Caco-2 (cell line): ENCODE measurements at regions of chr2 and their contacts with region 1.

Region 1: GRCh38 chr2:20225294-20226151 is 593 bp upstream of the SDC1 start:
- DNase-seq: peak; percentile 88 to 89
- H3K4me3 ChIP-seq: peak overlapping the region; percentile 56
- H3K4me3 Mint-ChIP-seq: peak overlapping the region; percentile 78
- H3K27ac Mint-ChIP-seq: peak overlapping the region; percentile 88
- H3K4me1 ChIP-seq: peaks cover 19% of the 10 kb centered on the region
- H3K4me1 Mint-ChIP-seq: peaks cover 13% of the 10 kb centered on the region
- H3K27me3 ChIP-seq: no peaks in the 10 kb centered on the region
- H3K27me3 Mint-ChIP-seq: no peaks in the 10 kb centered on the region
- CTCF ChIP-seq: peak; percentile 60 to 83

Region 2: GRCh38 chr2:19955544-19956422 is 269.7 kb before region 1 on chr2:
- CTCF ChIA-PET with region 1: interaction called, 8 read pairs
- POLR2A ChIA-PET with region 1: no interaction called
- intact Hi-C with region 1: loop called (anchors 1 kb)
- DNase-seq: peak; percentile 78 to 82
- H3K4me3 ChIP-seq: no peak overlapping the region
- H3K4me3 Mint-ChIP-seq: no peak overlapping the region
- H3K27ac Mint-ChIP-seq: no peak overlapping the region
- H3K4me1 ChIP-seq: no peaks in the 10 kb centered on the region
- H3K4me1 Mint-ChIP-seq: no peaks in the 10 kb centered on the region
- H3K27me3 ChIP-seq: no peaks in the 10 kb centered on the region
- H3K27me3 Mint-ChIP-seq: no peaks in the 10 kb centered on the region
- CTCF ChIP-seq: peak; percentile 88 to 95

Region 3: GRCh38 chr2:20135631-20136050 is 89.9 kb before region 1 on chr2:
- CTCF ChIA-PET with region 1: interaction called, 22 read pairs
- POLR2A ChIA-PET with region 1: no interaction called
- intact Hi-C with region 1: loop called (anchors 1 kb)
- DNase-seq: peak; percentile 64 to 80
- H3K4me3 ChIP-seq: no peak overlapping the region
- H3K4me3 Mint-ChIP-seq: no peak overlapping the region
- H3K27ac Mint-ChIP-seq: no peak overlapping the region
- H3K4me1 ChIP-seq: no peaks in the 10 kb centered on the region; the same call in 1 of the 2 replicates
- H3K4me1 Mint-ChIP-seq: peaks cover 21% of the 10 kb centered on the region
- H3K27me3 ChIP-seq: no peaks in the 10 kb centered on the region
- H3K27me3 Mint-ChIP-seq: peaks cover 3% of the 10 kb centered on the region
- CTCF ChIP-seq: peak; percentile 77 to 91

Region 4: DNA sequence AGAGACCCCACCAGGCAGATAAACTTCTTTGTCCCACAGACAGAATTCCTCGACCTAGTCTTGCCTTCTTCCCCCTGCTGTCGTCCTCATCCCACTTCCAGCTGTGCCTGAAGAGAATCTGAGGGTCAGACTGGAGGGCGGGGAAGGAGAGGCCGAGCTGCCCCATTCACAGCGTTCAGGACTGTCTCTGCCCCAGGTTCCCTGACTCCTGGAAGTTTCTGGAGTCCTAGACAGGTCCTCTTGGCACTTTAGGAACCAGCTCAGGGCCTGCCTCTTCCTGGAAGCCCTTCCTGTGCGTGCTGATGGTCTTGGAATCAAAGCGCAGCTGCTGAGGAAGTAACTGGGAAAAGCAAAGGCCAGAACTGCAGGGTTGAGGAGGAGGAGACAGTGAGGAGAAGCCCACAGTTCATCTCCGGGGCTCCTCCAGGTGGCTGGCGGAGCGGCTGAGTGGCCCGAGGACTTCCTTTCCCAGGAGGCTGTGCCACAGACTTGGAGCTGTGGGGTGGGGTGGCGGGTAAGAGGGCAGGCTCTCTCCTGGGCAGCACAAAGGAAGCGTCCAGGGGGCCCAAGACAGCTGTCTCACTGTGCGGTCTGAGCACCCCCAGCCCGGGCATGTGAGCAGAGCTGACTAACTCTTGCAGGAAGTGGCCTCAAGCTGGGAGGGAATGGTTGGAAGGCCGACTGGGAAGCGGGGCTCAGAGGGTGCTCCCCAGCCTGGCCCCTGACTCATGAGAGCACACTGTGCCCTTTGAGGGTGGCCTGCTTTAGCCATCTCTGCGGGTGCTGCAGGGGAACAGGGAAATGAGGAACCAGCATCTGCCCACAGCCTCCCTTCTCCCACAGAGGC is 40.1 kb before region 1 on chr2:
- CTCF ChIA-PET with region 1: interaction called, 7 read pairs
- POLR2A ChIA-PET with region 1: interaction called, 3 read pairs
- intact Hi-C with region 1: loop called (anchors 2 kb)
- DNase-seq: no peak
- H3K4me3 ChIP-seq: no peak overlapping the region
- H3K4me3 Mint-ChIP-seq: no peak overlapping the region
- H3K27ac Mint-ChIP-seq: peak overlapping the region; percentile 83
- H3K4me1 ChIP-seq: peaks cover 42% of the 10 kb centered on the region
- H3K4me1 Mint-ChIP-seq: peaks cover 25% of the 10 kb centered on the region
- H3K27me3 ChIP-seq: no peaks in the 10 kb centered on the region
- H3K27me3 Mint-ChIP-seq: no peaks in the 10 kb centered on the region
- CTCF ChIP-seq: no peak

Region 5: DNA sequence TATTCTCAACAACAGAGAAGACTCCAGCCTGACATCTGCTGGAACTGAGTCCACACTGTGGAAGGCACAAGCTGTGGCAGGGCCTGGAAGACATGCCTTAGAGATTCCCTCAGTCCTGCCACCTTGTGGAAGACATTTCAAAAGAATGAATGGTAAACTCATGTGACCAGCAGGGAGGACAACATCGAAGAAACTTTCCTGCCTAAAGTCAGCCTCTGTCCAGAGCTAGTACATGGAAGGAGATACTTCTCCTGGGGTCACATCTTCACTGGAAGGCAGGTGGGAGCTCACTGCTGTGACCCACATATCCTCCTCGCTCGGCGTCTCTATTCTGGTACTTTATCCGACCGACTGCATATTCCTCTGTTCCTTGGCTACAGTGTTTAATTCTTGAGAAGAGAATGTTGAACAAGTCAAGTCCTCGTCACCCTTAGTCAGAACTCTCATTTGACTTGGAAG is 65.6 kb after region 1 on chr2:
- CTCF ChIA-PET with region 1: interaction called, 10 read pairs
- POLR2A ChIA-PET with region 1: no interaction called
- intact Hi-C with region 1: no loop called
- DNase-seq: peak; percentile 83 to 86
- H3K4me3 ChIP-seq: no peak overlapping the region
- H3K4me3 Mint-ChIP-seq: no peak overlapping the region
- H3K27ac Mint-ChIP-seq: no peak overlapping the region
- H3K4me1 ChIP-seq: peaks cover 11% of the 10 kb centered on the region
- H3K4me1 Mint-ChIP-seq: peaks cover 7% of the 10 kb centered on the region
- H3K27me3 ChIP-seq: no peaks in the 10 kb centered on the region
- H3K27me3 Mint-ChIP-seq: no peaks in the 10 kb centered on the region
- CTCF ChIP-seq: peak; percentile 77 to 80

Region 6: GRCh38 chr2:20350753-20351554 is 125.4 kb after region 1 on chr2 and contains the start of gene PUM2:
- CTCF ChIA-PET with region 1: no interaction called
- POLR2A ChIA-PET with region 1: no interaction called
- intact Hi-C with region 1: no loop called
- DNase-seq: peak; percentile 97 to 98
- H3K4me3 ChIP-seq: peak within 1 kb of the TSS; percentile 95
- H3K4me3 Mint-ChIP-seq: no peak within 1 kb of the TSS
- H3K27ac Mint-ChIP-seq: peak within 1 kb of the TSS; percentile 90
- H3K4me1 ChIP-seq: peaks cover 48% of the 10 kb centered on the region
- H3K4me1 Mint-ChIP-seq: peaks cover 12% of the 10 kb centered on the region
- H3K27me3 ChIP-seq: no peaks in the 10 kb centered on the region
- H3K27me3 Mint-ChIP-seq: no peaks in the 10 kb centered on the region
- CTCF ChIP-seq: no peak
- total RNA-seq, gene PUM2: 117 and 119 TPM in 2 replicates